ENCODE measurements at regions of chr2 and their contacts with region 1.

Region 1: GRCh38 chr2:113756355-113757137 is at the start of gene SLC35F5:
- DNase-seq: peak; percentile 93 to 97 (median 95)
- ATAC-seq: peak; percentile 97 to 99 (median 98)
- H3K4me3 ChIP-seq: peak within 1 kb of the TSS; percentile 68 to 97 (median 88)
- H3K27ac ChIP-seq: peak within 1 kb of the TSS; percentile 63 to 98 (median 95)
- H3K4me1 ChIP-seq: peaks cover 0 to 38% (median 19%) of the 10 kb centered on the region in 12 donors
- H3K27me3 ChIP-seq: no peaks in the 10 kb centered on the region
- CTCF ChIP-seq: no peak
- POLR2A ChIP-seq: peak in 1 of 2 donors; percentile 84
- total RNA-seq, gene SLC35F5: 38.2 to 97.2 (median 63.9) TPM

Region 2: GRCh38 chr2:113818382-113818951 is 61.9 kb after region 1 on chr2:
- intact Hi-C with region 1: loop called in 2 of 10 experiments (anchors 5 kb)
- DNase-seq: peak in 4 of 5 donors; percentile 18 to 63 (median 42)
- ATAC-seq: peak; percentile 79 to 97 (median 88)
- H3K4me3 ChIP-seq: peak overlapping the region in 8 of 12 donors; percentile 12 to 49 (median 30)
- H3K27ac ChIP-seq: peak overlapping the region; percentile 38 to 84 (median 67)
- H3K4me1 ChIP-seq: peaks cover 0 to 16% (median 2%) of the 10 kb centered on the region in 12 donors
- H3K27me3 ChIP-seq: no peaks in the 10 kb centered on the region
- CTCF ChIP-seq: no peak
- POLR2A ChIP-seq: no peak